ENCODE measurements at regions of chr10 and their contacts with region 1.

Region 1: DNA sequence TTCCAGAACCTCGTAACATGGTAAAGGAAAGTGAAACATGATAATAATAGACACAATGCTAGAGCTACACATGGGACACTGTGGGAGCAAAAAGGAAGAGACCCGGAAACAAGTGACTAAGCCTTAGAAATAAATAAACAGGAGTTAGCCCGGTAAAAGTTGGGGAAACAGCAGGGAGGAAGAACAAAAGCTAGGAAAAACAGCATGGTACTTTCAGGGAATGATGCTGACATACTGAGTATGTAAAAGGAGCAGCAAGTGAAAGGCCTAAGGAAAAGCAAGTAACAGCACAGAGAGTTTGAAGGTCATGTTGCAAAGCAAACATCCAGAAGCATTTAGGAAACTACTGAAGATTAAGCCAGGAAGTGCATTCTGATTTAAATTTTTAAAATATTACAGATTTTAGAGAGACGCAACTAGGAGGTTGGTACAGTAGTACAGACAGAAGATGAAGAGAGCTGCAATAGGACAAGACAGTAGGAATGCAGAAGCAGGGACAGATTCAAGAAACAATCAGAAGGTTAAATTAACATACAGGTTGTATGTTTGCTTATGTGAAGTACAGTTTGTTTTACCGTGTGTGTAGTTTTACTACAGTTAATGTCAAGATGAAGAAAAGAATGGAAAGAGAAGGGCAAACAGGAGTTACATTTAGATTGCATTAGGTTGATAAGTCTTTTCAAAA is 63.7 kb downstream of the ARHGAP12 start:
- DNase-seq: no peak
- H3K4me3 ChIP-seq: no peak overlapping the region
- CTCF ChIP-seq: no peak

Region 2: GRCh38 chr10:31851216-31851615 is 13.8 kb before region 1 on chr10:
- CTCF ChIA-PET with region 1: interaction called, 14 read pairs
- POLR2A ChIA-PET with region 1: no interaction called
- DNase-seq: no peak
- H3K4me3 ChIP-seq: no peak overlapping the region
- CTCF ChIP-seq: no peak

Region 3: GRCh38 chr10:31930023-31930751 is 65.2 kb after region 1 on chr10:
- CTCF ChIA-PET with region 1: interaction called, 10 read pairs
- POLR2A ChIA-PET with region 1: no interaction called
- DNase-seq: no peak
- H3K4me3 ChIP-seq: peak overlapping the region; percentile 75
- CTCF ChIP-seq: no peak

Region 4: DNA sequence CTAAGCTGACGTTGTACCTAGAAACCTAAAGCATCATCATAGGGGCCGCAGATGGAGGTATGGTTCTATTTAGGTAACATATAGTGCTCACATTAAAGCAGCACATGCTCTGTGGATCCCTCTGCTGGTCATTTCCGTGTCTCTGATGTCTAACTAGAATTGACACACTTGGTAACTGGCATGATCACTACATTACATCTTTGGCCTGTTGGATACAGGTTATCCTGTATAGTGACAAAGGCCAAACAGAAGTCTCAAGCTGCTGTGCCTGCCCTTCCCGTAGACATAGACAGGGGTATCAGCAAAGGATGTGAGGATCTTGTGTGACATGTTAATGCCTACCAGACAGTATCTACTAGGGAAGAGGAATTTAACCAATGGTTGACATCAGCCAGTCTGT is 140.1 kb after region 1 on chr10:
- CTCF ChIA-PET with region 1: interaction called, 100 read pairs
- POLR2A ChIA-PET with region 1: no interaction called
- DNase-seq: no peak
- H3K4me3 ChIP-seq: no peak overlapping the region
- CTCF ChIP-seq: peak; percentile 60

Region 5: DNA sequence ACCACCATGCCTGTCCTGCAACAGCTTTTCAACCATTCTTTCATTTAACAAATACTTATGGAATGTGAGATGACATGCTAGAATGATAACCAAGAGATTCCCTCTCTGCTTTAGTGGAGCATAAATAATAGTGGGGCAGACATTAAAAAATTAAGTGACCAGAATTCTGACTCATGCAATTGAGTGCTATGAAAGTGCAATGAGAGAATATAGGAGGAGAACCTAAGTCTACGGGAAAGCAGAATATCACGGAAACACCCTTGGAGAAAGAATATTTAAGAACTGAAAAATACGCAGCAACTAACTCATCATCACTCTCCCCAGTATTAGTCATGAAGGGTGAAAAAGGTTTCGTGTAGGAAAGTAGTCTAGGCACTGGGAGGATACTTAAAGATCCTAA is 184.1 kb after region 1 on chr10:
- CTCF ChIA-PET with region 1: no interaction called
- POLR2A ChIA-PET with region 1: no interaction called
- DNase-seq: no peak
- H3K4me3 ChIP-seq: no peak overlapping the region
- CTCF ChIP-seq: no peak

Region 6: DNA sequence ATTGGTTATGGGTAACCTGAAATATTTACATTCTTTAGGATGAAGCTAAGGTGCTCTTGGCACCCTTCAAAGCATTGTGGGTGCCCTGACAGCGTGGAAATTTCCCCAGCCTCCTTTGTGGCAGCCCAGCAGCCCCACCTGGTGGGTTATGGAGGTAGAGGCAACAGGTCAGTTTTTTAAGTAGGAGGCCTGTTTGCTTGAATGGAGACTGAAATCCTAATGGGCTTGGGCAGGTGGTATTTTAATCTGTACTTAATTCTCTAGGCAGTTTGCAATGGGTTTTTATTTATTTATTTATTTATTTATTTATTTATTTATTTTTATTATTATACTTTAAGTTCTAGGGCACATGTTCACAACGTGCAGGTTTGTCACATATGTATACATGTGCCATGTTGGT is 342.6 kb after region 1 on chr10:
- CTCF ChIA-PET with region 1: interaction called, 10 read pairs
- POLR2A ChIA-PET with region 1: no interaction called
- DNase-seq: no peak
- H3K4me3 ChIP-seq: no peak overlapping the region
- CTCF ChIP-seq: peak; percentile 58